WTC11 (cell line): ENCODE measurements at regions of chr12 and their contacts with region 1.

Region 1: DNA sequence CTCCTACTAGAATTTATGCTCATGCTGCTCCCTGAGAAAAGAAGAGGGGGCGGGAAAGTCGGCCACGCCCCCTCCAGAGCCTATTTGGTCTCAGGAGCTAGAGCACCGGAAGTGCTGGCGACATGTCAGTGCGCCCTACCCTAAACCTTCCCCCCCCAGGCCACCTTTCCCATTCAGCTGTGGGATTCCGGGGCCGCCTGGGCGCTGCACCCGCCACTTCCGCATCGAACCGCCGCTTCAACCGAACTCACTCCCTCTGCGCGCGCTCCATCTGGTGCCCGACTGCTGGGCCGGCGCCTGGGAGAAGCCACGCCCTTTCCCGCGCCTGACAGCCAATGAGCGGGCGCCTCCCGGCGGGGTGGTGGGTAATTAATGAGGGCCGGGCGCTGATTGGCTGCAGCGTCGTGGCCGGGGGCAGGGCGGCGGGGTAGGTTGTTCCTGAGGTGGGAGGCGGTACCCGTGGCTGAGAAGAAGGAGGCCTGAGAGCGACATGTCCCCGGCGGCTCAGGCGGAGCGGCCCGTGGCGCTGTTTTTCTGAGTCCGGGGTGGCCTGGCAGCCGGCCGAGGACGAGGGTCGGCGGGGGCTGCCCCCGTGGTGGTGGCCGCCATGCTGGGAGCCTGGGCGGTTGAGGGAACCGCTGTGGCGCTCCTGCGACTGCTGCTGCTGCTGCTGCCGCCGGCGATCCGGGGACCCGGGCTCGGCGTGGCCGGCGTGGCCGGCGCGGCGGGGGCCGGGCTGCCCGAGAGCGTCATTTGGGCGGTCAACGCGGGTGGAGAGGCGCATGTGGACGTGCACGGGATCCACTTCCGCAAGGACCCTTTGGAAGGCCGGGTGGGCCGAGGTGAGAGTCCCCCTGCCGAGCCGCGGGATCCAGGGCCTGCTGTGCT is at the start of gene MLEC:
- DNase-seq: peak; percentile 99
- ATAC-seq: peak; percentile 85
- H3K4me3 Mint-ChIP-seq: peak within 1 kb of the TSS; percentile 87
- H3K27ac Mint-ChIP-seq: peak within 1 kb of the TSS; percentile 96
- H3K4me1 Mint-ChIP-seq: peaks cover 37% of the 10 kb centered on the region
- H3K27me3 Mint-ChIP-seq: no peaks in the 10 kb centered on the region
- CTCF ChIP-seq: no peak
- total RNA-seq, gene MLEC: 221 to 278 TPM (median 253 TPM) in 3 replicates

Region 2: DNA sequence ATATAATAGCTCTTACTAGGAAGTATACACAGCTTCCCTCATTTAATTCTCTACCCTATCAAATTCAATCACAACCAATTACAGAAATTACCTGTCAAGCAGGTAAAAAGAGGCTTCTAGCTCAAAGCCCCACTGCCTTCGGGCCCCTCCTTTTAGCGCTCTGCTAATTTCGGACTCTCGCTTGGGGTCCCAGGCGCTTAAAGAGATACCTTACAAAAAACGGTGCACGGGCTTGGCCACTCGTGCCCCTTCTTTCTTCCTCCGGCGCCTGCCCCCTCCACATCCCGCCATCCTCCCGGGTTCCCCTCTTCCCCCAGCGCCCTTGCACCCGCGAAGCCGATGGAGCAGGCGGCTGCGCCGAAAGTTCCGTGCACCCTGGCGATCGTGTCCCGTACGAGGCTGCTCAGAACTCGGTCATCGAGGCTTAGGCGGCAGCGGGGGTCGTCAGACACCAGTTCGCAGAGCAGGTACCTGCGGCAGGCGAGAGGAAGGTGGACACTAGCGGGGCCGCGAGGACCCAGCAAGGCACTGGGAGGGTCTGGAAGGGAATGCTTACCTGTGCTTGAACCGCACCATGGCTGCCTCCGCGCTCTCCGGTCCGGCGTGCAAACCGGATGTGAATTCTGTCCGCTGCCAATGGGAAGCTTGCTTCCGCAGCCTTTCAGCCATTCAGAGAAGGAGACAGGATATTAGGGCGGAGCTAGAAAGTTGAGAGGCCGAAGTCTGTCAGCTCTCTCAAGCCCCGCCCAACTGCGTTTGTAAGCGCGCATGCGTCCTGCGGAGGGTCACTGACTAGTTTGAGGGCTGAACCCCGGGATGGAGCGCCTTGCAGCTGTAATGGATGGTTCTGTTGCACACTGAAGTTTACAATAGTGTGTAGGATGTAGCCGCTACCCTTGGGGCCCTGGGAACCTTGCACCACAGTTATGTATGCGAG is 105.9 kb before region 1 on chr12 and contains the start of gene POP5:
- CTCF ChIA-PET with region 1: interaction called, 10 read pairs
- POLR2A ChIA-PET with region 1: interaction called, 3 read pairs
- DNase-seq: peak; percentile 98
- ATAC-seq: peak; percentile 91
- H3K4me3 Mint-ChIP-seq: peak within 1 kb of the TSS; percentile 100
- H3K27ac Mint-ChIP-seq: peak within 1 kb of the TSS; percentile 95
- H3K4me1 Mint-ChIP-seq: peaks cover 24% of the 10 kb centered on the region
- H3K27me3 Mint-ChIP-seq: peaks cover 12% of the 10 kb centered on the region
- CTCF ChIP-seq: no peak
- total RNA-seq, gene POP5: 53.9 to 57.7 TPM (median 54.7 TPM) in 3 replicates

Region 3: GRCh38 chr12:120797677-120798642 is 111.0 kb after region 1 on chr12:
- CTCF ChIA-PET with region 1: no interaction called
- POLR2A ChIA-PET with region 1: no interaction called
- DNase-seq: no peak
- ATAC-seq: no peak
- H3K4me3 Mint-ChIP-seq: no peak overlapping the region
- H3K27ac Mint-ChIP-seq: no peak overlapping the region
- H3K4me1 Mint-ChIP-seq: peaks cover 27% of the 10 kb centered on the region
- H3K27me3 Mint-ChIP-seq: no peaks in the 10 kb centered on the region
- CTCF ChIP-seq: no peak

Region 4: DNA sequence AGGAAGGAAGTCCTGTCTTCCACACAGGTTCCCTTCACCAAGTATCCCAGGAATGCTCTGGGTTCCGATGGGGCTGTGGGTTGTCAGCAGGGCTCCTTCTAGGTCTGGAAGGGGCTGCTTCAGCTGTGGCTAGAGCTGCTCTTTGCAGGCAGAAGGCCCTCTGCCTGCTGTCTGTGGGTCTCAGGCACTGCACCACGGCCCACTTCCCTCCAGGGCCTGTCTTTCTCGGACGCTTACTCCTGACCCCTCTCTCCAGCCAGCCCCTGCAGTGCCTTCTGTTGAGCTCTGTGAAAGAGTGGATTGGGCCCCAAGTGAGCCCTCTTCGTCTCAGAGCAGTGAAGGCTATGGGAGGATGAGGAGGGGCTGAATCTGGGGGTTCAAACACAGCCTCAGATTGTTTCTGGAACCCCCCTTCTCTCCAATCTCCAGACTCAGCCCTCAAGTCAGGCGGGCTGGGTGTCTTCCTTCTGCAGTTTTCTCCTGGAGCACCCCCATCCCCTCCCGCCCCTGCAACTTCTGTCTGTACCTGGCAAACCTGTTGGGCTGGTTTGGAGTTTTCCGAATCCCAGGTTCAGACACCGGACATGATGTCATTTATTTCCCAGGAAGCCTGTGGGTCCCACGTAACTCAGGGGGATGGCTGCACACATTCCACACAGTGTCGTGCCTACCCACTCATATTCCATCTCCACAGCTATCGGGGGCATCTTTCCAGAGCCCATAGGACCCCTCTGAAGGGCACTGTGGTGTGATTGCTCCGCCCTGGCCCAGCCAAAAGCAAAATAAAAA is 242.1 kb after region 1 on chr12:
- CTCF ChIA-PET with region 1: no interaction called
- POLR2A ChIA-PET with region 1: no interaction called
- DNase-seq: peak; percentile 64
- ATAC-seq: peak; percentile 77
- H3K4me3 Mint-ChIP-seq: peak overlapping the region; percentile 34; the same call in 1 of the 2 replicates
- H3K27ac Mint-ChIP-seq: peak overlapping the region; percentile 74
- H3K4me1 Mint-ChIP-seq: peaks cover 35% of the 10 kb centered on the region
- H3K27me3 Mint-ChIP-seq: no peaks in the 10 kb centered on the region
- CTCF ChIP-seq: no peak

Region 5: DNA sequence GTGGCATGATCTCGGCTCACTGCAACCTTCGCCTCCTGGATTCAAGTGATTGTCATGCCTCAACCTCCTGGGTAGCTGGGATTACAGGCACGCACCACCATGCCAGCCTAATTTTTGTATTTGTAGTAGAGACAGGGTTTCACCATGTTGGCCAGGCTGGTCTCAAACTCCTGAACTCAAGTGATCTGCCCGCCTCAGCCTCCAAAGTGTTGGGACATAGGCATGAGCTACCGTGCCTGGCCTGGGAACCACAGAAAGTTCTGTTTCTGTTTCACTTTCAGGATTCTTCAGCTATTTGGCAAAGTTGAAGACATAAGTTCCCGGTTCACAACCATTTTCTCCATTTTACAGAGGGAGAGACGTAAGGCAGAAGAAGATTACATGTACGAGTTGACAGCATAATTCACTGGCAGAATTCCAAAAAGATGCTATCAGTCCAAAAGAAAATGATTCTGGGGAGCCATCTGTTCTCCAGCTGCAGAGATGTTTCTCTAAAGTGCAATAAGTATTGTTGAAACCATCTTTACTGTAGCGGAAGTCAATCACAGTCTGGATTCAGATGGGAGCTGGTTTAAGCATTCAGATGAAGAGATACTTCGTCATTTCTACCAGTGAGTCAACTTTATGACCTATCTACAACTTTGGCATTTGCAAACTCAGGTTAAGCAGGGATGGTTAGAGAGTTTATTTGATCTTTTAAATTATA is 704.8 kb after region 1 on chr12:
- CTCF ChIA-PET with region 1: no interaction called
- POLR2A ChIA-PET with region 1: no interaction called
- DNase-seq: no peak
- ATAC-seq: no peak
- H3K4me3 Mint-ChIP-seq: no peak overlapping the region
- H3K27ac Mint-ChIP-seq: no peak overlapping the region
- H3K4me1 Mint-ChIP-seq: no peaks in the 10 kb centered on the region
- H3K27me3 Mint-ChIP-seq: no peaks in the 10 kb centered on the region; the same call in 1 of the 2 replicates
- CTCF ChIP-seq: no peak